H1 (cell line): ENCODE measurements at regions of chr1 and their contacts with region 1.

Region 1: DNA sequence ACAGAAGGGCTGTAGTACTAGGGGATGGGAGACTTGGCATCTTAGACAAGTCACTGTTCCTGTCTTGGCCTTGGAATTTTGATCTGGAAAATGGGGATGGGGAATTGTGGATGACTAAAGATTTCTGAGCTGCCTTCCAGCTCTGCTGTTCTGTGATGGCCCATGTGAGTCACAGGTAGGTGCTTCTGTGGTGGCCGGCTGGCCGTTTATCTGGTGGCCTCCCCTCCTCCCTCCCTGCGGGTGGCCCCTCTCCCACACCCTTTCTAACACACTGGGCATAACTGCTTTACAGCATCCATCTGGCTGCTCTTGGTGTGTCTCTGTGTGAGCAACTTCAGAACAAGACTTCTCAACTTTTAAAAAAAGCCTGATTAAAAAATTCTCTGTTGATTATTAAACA is 35.9 kb downstream of the KCNA2 start:
- DNase-seq: no peak
- H3K4me3 ChIP-seq: no peak overlapping the region
- H3K27ac ChIP-seq: no peak overlapping the region
- H3K4me1 ChIP-seq: peaks cover 0 to 4% (median 0%) of the 10 kb centered on the region in 4 experiments; a peak in 1 of 7 replicates
- H3K27me3 ChIP-seq: peaks cover 14 to 28% (median 19%) of the 10 kb centered on the region in 4 experiments
- CTCF ChIP-seq: no peak
- EP300 ChIP-seq: no peak
- POLR2A ChIP-seq: no peak
- RAD21 ChIP-seq: no peak

Region 2: DNA sequence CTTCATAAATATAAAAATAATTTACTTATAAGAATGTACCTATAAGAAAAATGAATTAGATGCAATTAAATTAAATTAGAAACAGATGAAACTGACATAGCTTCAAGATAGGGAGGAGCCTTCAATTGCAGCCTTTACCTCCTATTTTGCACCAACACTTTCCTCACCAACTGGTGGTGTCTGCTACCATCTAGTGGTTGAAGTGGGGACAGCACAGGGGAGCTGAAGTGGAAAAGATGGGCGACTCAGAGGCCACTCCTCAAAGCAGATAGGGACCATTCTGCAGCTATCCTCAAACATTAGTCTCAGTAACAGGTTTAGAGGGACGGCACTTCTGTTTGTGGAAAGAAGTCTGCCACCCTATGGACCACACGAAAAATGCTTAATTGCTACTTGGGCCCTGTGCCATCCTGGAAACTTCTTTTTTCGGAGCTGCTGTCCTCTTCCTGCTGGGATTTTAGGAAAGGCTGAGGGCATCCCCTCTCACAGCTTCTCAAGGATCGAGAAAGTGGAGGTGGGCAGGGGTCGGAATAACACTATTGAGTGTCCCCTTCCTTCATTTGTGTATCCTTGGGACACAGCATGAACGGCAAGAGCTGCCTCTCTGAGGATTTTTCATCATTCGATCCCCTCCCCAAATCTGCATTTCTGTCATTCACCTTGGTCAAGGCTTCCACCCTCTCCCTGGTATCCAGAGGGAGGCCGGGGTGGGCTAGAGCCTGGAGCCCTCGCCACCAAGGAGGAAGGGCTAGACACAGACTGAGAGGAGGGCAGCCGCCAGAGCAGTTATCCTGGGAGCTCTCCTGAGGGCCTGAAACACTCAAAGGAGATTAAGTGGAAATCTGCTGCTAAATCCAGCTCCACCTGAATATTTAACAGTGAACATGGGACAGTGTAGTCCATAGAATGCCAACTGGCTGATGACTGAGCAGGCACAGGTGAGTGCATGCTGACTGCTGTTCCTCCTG is 109.8 kb before region 1 on chr1:
- CTCF ChIA-PET with region 1: no interaction called
- POLR2A ChIA-PET with region 1: no interaction called
- DNase-seq: peak in 1 of 2 experiments; percentile 93
- H3K4me3 ChIP-seq: no peak overlapping the region
- H3K27ac ChIP-seq: no peak overlapping the region
- H3K4me1 ChIP-seq: no peaks in the 10 kb centered on the region
- H3K27me3 ChIP-seq: no peaks in the 10 kb centered on the region
- CTCF ChIP-seq: peak; percentile 87 to 97 (median 95)
- EP300 ChIP-seq: no peak
- POLR2A ChIP-seq: no peak
- RAD21 ChIP-seq: peak; percentile 100

Region 3: GRCh38 chr1:110554871-110555801 is 15.2 kb before region 1 on chr1:
- CTCF ChIA-PET with region 1: interaction called, 46 read pairs
- POLR2A ChIA-PET with region 1: interaction called, 3 read pairs
- DNase-seq: peak in 1 of 2 experiments; percentile 81
- H3K4me3 ChIP-seq: peak overlapping the region; percentile 37 to 57 (median 44)
- H3K27ac ChIP-seq: no peak overlapping the region
- H3K4me1 ChIP-seq: peaks cover 0 to 8% (median under 1%) of the 10 kb centered on the region in 4 experiments; a peak in 3 of 7 replicates
- H3K27me3 ChIP-seq: peaks cover 3 to 32% (median 24%) of the 10 kb centered on the region in 4 experiments
- CTCF ChIP-seq: peak; percentile 73 to 81 (median 76)
- EP300 ChIP-seq: no peak
- POLR2A ChIP-seq: no peak
- RAD21 ChIP-seq: peak; percentile 32 to 52